Left ventricle myocardium superior (tissue), 1 donor: ENCODE measurements at regions of chr4 and their contacts with region 1.

Region 1: GRCh38 chr4:73019462-73020047 is 50.0 kb downstream of the COX18 start:
- DNase-seq: no peak
- ATAC-seq: no peak

Region 2: DNA sequence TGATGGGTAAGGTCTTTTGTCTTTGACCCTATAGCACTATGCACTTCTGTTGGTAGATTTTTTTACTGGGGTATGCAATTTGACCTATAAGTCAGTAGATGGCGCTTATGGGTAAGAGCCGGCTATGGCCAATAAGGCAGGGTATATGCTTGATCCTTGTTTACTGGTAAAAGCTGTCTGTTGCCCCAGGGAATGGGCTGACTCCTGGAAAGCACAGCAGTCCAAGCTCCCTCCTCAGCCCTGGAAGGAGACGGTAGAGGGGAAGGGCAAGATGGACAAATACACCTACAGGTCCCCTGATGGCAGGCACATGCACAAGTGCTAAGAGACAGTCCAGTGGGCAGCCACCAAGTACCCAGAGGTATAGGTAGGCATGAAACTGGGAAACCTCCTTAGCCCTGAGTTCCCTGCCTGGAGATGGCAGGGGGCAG is 514.2 kb before region 1 on chr4:
- intact Hi-C with region 1: loop called (anchors 5 kb)
- DNase-seq: no peak
- ATAC-seq: peak; percentile 66

Region 3: DNA sequence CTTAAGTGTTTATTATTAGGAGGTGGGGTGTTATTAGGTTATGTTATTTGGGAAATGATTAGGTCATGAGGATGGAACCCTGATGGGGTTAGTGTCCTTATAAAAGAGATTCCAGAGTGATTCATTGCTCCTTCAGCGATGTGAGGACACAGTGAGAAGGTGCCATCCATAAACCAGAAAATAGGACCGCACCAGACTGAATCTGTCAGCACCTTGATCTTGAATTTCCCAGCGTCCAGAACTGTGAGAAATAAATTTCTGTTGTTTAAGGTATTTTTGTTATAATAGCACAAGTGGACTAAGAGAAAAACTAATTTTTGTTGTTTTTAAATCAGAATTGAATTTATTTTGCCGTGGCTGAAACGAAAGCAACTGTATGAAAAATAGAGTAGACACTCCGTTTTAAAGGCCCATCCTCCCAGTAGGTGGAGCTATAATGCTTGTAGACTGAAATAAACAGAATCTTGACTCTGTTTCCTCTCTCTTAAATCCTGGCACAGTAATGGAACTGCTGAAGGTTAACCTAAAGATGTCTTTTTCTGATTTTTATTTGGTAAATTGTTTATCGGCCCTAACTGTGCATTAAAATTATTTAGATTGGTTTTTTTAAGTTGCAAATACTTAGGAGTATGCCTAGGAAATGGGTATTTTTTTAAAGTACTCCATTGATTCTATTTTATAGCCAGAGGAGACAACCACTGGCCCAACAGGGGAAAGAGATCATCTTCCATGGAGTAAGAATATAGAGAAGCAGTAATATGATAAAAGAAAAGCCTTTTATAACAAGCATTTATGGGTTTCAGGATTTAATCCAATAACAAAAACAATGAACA is 317.4 kb before region 1 on chr4:
- intact Hi-C with region 1: loop called (anchors 10 kb)
- DNase-seq: no peak
- ATAC-seq: peak; percentile 61

Region 4: DNA sequence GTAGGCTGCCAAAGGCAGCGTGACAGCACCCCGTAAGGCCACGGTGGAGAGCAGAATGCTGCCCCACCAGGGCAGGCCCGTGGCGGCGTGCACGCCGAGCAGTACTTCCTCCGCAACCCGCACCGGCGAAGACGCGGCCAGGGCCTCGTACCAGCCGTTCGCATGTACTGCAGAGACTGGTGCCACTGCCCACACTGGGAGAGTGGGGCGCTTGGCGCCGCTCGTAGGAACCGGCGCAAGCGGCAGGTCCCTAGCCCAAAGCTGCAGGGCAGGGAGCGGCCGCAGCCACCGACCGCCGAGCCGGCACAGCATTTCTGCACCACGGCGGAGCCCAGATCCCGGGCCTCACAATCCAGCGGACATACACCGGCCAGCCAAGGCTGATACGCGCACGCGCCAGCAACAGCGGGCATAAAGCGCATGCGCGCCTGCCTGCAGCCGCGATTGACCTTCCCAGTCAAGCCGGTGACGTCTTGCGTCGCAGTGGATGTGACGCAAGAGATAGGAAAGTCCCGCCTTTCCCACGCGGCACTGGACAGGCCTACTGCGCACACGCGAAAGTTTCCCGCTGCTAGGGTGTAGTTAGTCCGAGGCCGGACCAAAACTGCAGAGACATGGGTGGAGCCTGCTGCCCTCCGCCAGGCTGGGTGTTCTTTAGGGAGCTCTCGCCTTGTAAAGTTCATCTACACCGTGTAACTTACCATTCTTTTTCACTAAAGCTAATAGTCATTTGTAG is 50.0 kb after region 1 on chr4 and contains the start of gene COX18:
- intact Hi-C with region 1: no loop called
- DNase-seq: peak; percentile 99
- ATAC-seq: peak; percentile 97
- total RNA-seq, gene COX18: 18.8 TPM

Region 5: DNA sequence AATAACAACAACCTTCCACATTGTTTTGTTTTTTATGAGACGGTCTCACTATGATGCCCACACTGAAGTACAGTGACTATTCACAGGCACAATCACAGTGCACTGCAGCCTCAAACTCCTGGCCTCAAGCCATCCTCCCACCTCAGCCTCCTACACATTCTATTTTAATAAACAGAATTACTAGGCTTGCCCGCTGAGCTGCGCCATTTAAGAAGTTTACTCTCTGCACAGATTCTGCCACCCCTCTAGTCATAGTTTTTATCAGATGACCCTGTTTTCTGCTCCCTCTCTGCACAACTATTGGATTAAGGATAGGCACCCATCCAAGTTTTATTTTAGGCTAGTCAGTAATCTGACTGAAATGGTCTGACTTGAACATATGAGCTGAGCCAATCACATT is 61.2 kb after region 1 on chr4:
- intact Hi-C with region 1: no loop called
- DNase-seq: no peak
- ATAC-seq: peak; percentile 34